Calu3 (cell line): ENCODE measurements at regions of chr5 and their contacts with region 1.

Region 1: GRCh38 chr5:124661317-124662141 is 84.9 kb downstream of the ZNF608 start:
- DNase-seq: peak; percentile 78
- H3K4me3 Mint-ChIP-seq: peak overlapping the region; percentile 69
- H3K27ac Mint-ChIP-seq: peak overlapping the region; percentile 98
- H3K4me1 Mint-ChIP-seq: peaks cover 58% of the 10 kb centered on the region
- H3K27me3 Mint-ChIP-seq: no peaks in the 10 kb centered on the region
- CTCF ChIP-seq: no peak

Region 2: GRCh38 chr5:124599028-124599973 is 62.2 kb before region 1 on chr5:
- CTCF ChIA-PET with region 1: interaction called, 5 read pairs
- intact Hi-C with region 1: loop called (anchors 2 kb)
- DNase-seq: peak; percentile 67
- H3K4me3 Mint-ChIP-seq: peak overlapping the region; percentile 24
- H3K27ac Mint-ChIP-seq: peak overlapping the region; percentile 74
- H3K4me1 Mint-ChIP-seq: peaks cover 43% of the 10 kb centered on the region
- H3K27me3 Mint-ChIP-seq: no peaks in the 10 kb centered on the region
- CTCF ChIP-seq: no peak

Region 3: GRCh38 chr5:124790895-124791732 is 129.6 kb after region 1 on chr5:
- CTCF ChIA-PET with region 1: no interaction called
- intact Hi-C with region 1: loop called (anchors 5 kb)
- DNase-seq: no peak
- H3K4me3 Mint-ChIP-seq: no peak overlapping the region
- H3K27ac Mint-ChIP-seq: peak overlapping the region; percentile 80
- H3K4me1 Mint-ChIP-seq: peaks cover 32% of the 10 kb centered on the region
- H3K27me3 Mint-ChIP-seq: no peaks in the 10 kb centered on the region
- CTCF ChIP-seq: no peak

Region 4: GRCh38 chr5:124906339-124907097 is 245.0 kb after region 1 on chr5:
- CTCF ChIA-PET with region 1: no interaction called
- intact Hi-C with region 1: loop called (anchors 5 kb)
- DNase-seq: peak; percentile 13
- H3K4me3 Mint-ChIP-seq: no peak overlapping the region
- H3K27ac Mint-ChIP-seq: peak overlapping the region; percentile 17
- H3K4me1 Mint-ChIP-seq: peaks cover 46% of the 10 kb centered on the region
- H3K27me3 Mint-ChIP-seq: no peaks in the 10 kb centered on the region
- CTCF ChIP-seq: no peak

Region 5: GRCh38 chr5:125043781-125044391 is 382.4 kb after region 1 on chr5:
- CTCF ChIA-PET with region 1: no interaction called
- intact Hi-C with region 1: loop called (anchors 5 kb)
- DNase-seq: peak; percentile 56
- H3K4me3 Mint-ChIP-seq: no peak overlapping the region
- H3K27ac Mint-ChIP-seq: no peak overlapping the region
- H3K4me1 Mint-ChIP-seq: peaks cover 62% of the 10 kb centered on the region
- H3K27me3 Mint-ChIP-seq: no peaks in the 10 kb centered on the region
- CTCF ChIP-seq: no peak